Activated CD8-positive, alpha-beta T cell treated with anti-CD3 and anti-CD28 coated beads, Interleukin-2, amount 10 ng/mL, durations not matched to agents 7 days and 5 days (primary cell): ENCODE measurements at regions of chr9 and their contacts with region 1.

Region 1: GRCh38 chr9:129737479-129738274 is 15.2 kb downstream of the PTGES start:
- DNase-seq: peak; percentile 90
- ATAC-seq: peak; percentile 94
- H3K4me3 Mint-ChIP-seq: peak overlapping the region; percentile 69
- H3K27ac Mint-ChIP-seq: peak overlapping the region; percentile 73
- H3K4me1 Mint-ChIP-seq: peaks cover 12% of the 10 kb centered on the region
- H3K27me3 Mint-ChIP-seq: no peaks in the 10 kb centered on the region

Region 2: DNA sequence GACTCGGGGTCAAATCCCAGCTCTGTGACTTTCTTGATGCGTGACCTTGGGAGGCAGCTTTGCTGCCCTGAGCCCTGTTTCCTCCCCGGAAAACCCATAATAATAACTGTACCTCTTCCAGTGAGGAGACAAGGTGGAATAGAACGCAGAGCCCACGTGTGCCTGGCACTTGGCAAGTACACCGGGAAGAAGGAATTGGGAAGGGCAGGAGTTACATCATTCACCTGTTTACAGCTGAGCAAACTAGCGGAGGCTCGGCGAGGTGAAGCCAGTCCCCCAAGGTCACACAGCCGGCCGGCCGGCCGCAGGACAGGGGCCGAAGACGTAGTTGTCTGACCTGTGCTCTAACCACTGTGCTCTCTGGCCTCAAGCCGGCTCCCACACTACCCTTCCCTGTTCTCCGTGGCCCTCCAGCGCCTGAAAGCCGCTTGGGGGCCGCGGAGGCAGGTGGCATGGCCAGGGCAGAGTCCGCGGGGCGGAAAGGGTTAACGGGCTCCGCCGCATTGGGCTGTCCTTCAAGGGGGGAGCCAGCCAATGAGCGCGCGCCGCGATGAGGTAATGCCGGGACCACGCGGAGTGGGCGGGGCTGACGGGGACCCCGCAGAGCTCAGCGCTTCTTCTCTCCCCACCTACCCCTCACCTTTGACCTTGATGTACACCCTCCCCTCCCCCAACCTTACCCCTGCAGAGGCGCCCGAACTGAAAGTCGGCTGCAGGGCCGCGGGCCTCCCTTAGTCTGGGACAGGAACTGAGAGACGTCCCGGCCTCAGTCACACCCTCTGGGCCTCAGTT is 241.9 kb before region 1 on chr9:
- CTCF ChIA-PET with region 1: no interaction called
- POLR2A ChIA-PET with region 1: no interaction called
- DNase-seq: peak; percentile 87
- ATAC-seq: peak; percentile 82
- H3K4me3 Mint-ChIP-seq: peak overlapping the region; percentile 73
- H3K27ac Mint-ChIP-seq: peak overlapping the region; percentile 53
- H3K4me1 Mint-ChIP-seq: peaks cover 40% of the 10 kb centered on the region
- H3K27me3 Mint-ChIP-seq: no peaks in the 10 kb centered on the region

Region 3: GRCh38 chr9:129641746-129642513 is 95.7 kb before region 1 on chr9 and contains the start of gene ASB6:
- CTCF ChIA-PET with region 1: interaction called, 18 read pairs
- POLR2A ChIA-PET with region 1: no interaction called
- DNase-seq: peak; percentile 94
- ATAC-seq: peak; percentile 93
- H3K4me3 Mint-ChIP-seq: peak within 1 kb of the TSS; percentile 83
- H3K27ac Mint-ChIP-seq: peak within 1 kb of the TSS; percentile 88
- H3K4me1 Mint-ChIP-seq: peaks cover 19% of the 10 kb centered on the region
- H3K27me3 Mint-ChIP-seq: no peaks in the 10 kb centered on the region
- total RNA-seq, gene ASB6: 25.4 to 27.7 TPM

Region 4: GRCh38 chr9:129720865-129721545 is 16.7 kb before region 1 on chr9:
- CTCF ChIA-PET with region 1: interaction called, 90 read pairs
- POLR2A ChIA-PET with region 1: no interaction called
- DNase-seq: no peak
- ATAC-seq: no peak
- H3K4me3 Mint-ChIP-seq: no peak overlapping the region
- H3K27ac Mint-ChIP-seq: no peak overlapping the region
- H3K4me1 Mint-ChIP-seq: no peaks in the 10 kb centered on the region
- H3K27me3 Mint-ChIP-seq: peaks cover 2% of the 10 kb centered on the region

Region 5: GRCh38 chr9:129752915-129753729 is 15.4 kb after region 1 on chr9 and contains the start of gene PTGES:
- CTCF ChIA-PET with region 1: interaction called, 20 read pairs
- POLR2A ChIA-PET with region 1: no interaction called
- DNase-seq: peak; percentile 62
- ATAC-seq: peak; percentile 88
- H3K4me3 Mint-ChIP-seq: no peak within 1 kb of the TSS
- H3K27ac Mint-ChIP-seq: no peak within 1 kb of the TSS
- H3K4me1 Mint-ChIP-seq: peaks cover 19% of the 10 kb centered on the region
- H3K27me3 Mint-ChIP-seq: peaks cover 14% of the 10 kb centered on the region
- total RNA-seq, gene PTGES: not detected

Region 6: DNA sequence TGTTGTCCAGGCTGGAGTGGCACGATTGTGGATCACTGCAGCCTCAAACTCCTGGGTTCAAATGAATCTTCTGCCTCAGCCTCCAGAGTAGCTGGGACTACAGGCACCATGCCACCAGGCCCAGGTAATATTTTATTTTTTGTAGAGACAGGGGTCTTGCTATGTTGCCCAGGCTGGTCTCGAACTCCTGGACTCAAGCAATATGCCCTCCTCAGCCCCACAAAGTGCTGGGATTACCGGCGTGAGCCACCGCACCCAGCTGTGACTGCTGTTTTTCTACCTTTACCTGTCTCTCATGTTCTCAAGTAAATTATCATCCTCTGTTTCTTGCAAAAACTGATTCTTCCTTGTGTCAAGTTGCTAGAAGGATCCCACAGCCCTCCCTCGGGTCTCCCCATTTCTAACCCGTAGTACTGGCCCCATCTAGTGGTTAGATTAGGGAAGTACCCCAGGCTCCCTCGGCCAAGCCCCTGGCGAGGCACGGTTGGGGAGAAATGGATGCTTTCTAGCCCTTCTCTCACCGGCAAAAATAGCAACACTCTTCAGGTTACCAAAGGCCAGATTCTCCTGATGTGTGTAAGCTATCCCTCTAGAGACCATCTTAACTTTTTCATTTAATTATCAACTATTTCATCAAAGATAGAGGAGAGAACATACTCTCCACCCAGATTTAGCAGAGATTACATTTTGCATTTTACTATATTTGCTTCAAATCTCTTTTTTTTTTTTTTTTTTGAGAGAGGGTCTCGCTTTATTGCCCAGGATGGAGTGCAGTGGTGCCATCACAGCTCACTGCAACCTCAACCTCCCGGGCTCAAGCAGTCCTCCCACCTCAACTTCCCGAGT is 46.1 kb after region 1 on chr9:
- CTCF ChIA-PET with region 1: interaction called, 111 read pairs
- POLR2A ChIA-PET with region 1: interaction called, 3 read pairs
- DNase-seq: peak; percentile 83
- ATAC-seq: peak; percentile 94
- H3K4me3 Mint-ChIP-seq: no peak overlapping the region
- H3K27ac Mint-ChIP-seq: no peak overlapping the region
- H3K4me1 Mint-ChIP-seq: peaks cover 4% of the 10 kb centered on the region
- H3K27me3 Mint-ChIP-seq: peaks cover 19% of the 10 kb centered on the region